ENCODE measurements at regions of chr4 and their contacts with region 1.

Region 1: GRCh38 chr4:40719008-40719623 is 30.6 kb upstream of the NSUN7 start:
- DNase-seq: peak in 1 of 9 donors; percentile 39
- ATAC-seq: no peak
- H3K4me3 ChIP-seq: no peak overlapping the region
- H3K4me3 Mint-ChIP-seq: no peak overlapping the region
- H3K27ac ChIP-seq: no peak overlapping the region
- H3K27ac Mint-ChIP-seq: peak overlapping the region in 1 of 9 donors; percentile 36
- H3K4me1 ChIP-seq: peaks cover 0 to 13% of the 10 kb centered on the region in 2 donors
- H3K4me1 Mint-ChIP-seq: peaks cover 0 to 33% (median 0%) of the 10 kb centered on the region in 7 donors
- H3K27me3 ChIP-seq: no peaks in the 10 kb centered on the region
- H3K27me3 Mint-ChIP-seq: no peaks in the 10 kb centered on the region

Region 2: GRCh38 chr4:40325189-40326019 is 393.7 kb before region 1 on chr4:
- CTCF ChIA-PET with region 1: no interaction called
- POLR2A ChIA-PET with region 1: no interaction called
- intact Hi-C with region 1: loop called in 1 of 2 experiments (anchors 2 kb)
- DNase-seq: peak in 7 of 9 donors; percentile 70 to 85 (median 82)
- ATAC-seq: peak; percentile 100
- H3K4me3 ChIP-seq: no peak overlapping the region
- H3K4me3 Mint-ChIP-seq: peak overlapping the region in 4 of 10 donors; percentile 0 to 48 (median 14)
- H3K27ac ChIP-seq: peak overlapping the region; percentile 45
- H3K27ac Mint-ChIP-seq: peak overlapping the region in 8 of 9 donors; percentile 25 to 87 (median 64)
- H3K4me1 ChIP-seq: peaks cover 0 to 8% of the 10 kb centered on the region in 2 donors
- H3K4me1 Mint-ChIP-seq: peaks cover 13 to 40% (median 35%) of the 10 kb centered on the region in 7 donors
- H3K27me3 ChIP-seq: no peaks in the 10 kb centered on the region
- H3K27me3 Mint-ChIP-seq: peaks cover 0 to 7% (median 4%) of the 10 kb centered on the region in 5 donors

Region 3: DNA sequence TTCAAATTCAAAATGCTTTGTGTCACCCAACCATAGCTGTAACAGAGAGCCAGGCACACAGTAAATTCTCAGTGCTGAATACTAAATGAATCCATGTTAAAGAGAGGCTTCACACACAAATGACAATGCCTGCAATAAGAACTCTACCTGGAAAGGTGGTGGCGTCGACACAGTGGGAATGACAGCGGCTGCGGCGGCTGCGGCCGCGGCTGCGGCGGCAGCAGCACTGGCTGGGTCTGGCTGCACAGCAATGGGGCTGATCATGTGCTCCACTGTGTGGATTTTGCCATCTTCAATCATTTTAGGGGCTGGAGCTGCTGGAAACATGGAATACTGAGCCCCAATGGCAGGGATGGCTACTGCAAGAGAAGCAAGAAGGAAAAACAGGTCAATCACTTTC is 286.6 kb before region 1 on chr4:
- CTCF ChIA-PET with region 1: no interaction called
- POLR2A ChIA-PET with region 1: no interaction called
- intact Hi-C with region 1: loop called in 1 of 2 experiments (anchors 2 kb)
- DNase-seq: no peak
- ATAC-seq: no peak
- H3K4me3 ChIP-seq: no peak overlapping the region
- H3K4me3 Mint-ChIP-seq: peak overlapping the region in 6 of 10 donors; percentile 11 to 62 (median 51)
- H3K27ac ChIP-seq: peak overlapping the region; percentile 61
- H3K27ac Mint-ChIP-seq: peak overlapping the region; percentile 83 to 99 (median 89)
- H3K4me1 ChIP-seq: peaks cover 0 to 29% of the 10 kb centered on the region in 2 donors
- H3K4me1 Mint-ChIP-seq: peaks cover 11 to 60% (median 42%) of the 10 kb centered on the region in 7 donors
- H3K27me3 ChIP-seq: no peaks in the 10 kb centered on the region
- H3K27me3 Mint-ChIP-seq: no peaks in the 10 kb centered on the region

Region 4: DNA sequence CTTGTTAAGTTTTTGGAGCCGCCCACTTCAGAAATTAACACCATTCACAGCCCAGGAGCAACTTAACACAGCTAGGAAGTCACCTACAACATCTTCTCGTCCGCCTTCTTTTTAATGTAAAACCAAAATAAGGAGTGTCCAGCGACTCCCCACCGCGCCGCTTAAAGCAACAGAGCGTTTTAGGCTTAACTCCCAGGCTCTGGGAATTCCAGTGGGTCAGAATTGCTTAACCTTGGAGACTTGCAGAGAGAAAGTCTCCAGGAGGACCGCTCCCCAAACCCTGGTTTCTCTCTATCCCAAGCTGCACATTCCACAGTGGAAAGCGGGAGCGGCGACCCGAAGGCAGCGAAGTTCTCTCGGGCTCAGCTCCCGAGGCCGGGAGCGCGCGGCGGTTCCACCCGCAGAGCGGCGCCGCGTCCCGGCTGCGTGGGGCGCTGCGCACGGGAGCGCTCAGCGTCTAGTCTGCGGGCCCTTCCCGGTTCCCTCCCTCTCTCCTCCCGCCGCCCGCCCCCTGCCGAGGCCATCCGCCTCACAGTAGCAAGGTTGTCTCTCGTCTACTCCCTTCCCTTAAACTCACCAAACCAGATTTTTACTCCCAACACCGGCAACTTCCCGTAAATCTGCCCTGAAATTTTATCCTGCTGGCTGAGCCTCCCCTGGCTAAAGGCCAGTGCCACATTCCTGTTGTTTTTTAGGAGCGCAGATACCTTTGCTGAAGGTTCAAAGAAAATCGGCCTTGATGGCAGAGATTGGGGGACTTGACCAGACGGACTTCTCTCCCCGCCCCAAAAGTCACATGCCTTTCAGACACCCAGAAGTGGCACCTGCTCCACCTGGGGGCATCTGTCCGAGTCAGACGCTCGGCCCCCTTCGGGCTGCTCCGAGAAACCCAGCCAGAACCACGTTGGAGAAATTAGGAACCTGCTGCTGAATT is 89.4 kb before region 1 on chr4 and contains the start of gene RBM47:
- CTCF ChIA-PET with region 1: no interaction called
- POLR2A ChIA-PET with region 1: no interaction called
- intact Hi-C with region 1: loop called in 1 of 2 experiments (anchors 5 kb)
- DNase-seq: peak; percentile 4 to 43 (median 28)
- ATAC-seq: peak; percentile 81
- H3K4me3 ChIP-seq: peak within 1 kb of the TSS; percentile 76
- H3K4me3 Mint-ChIP-seq: peak within 1 kb of the TSS; percentile 77 to 97 (median 90)
- H3K27ac ChIP-seq: peak within 1 kb of the TSS; percentile 17
- H3K27ac Mint-ChIP-seq: peak within 1 kb of the TSS in 8 of 9 donors; percentile 62 to 89 (median 80)
- H3K4me1 ChIP-seq: peaks cover 0 to 13% of the 10 kb centered on the region in 2 donors
- H3K4me1 Mint-ChIP-seq: peaks cover 18 to 36% (median 22%) of the 10 kb centered on the region in 7 donors
- H3K27me3 ChIP-seq: no peaks in the 10 kb centered on the region
- H3K27me3 Mint-ChIP-seq: peaks cover 0 to 28% (median 21%) of the 10 kb centered on the region in 5 donors
- total RNA-seq, gene RBM47: 1.8 to 47.2 (median 2.6) TPM

Region 5: DNA sequence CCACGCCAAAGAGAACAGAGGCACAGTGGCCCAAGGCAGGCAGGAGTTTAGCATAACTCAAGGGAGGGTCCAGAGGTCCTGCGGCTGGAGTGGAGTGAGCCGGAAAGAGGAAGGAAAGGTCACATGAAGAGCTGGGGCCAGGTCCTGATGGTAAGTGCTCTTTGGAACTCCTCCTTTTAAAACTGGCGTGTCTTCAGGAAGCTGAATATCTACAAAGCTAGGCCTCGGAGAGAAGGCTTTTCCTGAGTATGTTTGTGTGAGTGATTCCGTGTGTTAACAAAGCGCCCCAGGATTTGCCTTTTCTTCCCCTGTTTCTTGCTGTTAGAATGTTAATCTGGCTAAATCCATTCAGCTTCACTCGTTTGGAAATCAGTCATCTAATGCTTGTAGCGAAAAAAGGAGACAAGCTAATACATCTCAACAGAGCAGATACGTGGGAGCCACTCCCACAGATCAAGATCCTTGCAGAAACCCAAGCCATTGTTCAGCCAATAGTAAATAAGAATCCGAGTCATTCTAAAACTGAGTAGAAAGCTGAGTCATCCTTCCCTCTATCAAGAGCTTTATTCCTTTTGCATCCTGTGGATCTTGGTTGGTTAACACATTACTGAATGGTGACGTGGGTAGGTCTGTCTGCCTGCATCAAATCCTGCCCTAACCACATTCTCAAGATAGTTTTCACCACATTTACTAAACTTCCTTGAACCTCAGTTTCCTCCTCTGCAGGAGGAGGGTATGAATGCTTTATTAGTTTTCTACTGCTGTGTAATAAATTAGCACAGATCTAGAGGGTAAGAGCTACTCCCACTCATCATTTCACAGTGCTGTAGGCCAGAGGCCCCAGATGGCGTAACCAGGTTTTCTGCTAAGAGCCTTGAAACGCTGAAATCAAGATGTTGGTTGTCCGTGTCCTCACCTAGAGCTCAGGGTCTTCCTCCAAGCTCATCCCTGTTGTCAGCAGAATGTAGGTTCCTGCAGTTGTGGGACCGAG is 46.3 kb before region 1 on chr4:
- CTCF ChIA-PET with region 1: no interaction called
- POLR2A ChIA-PET with region 1: no interaction called
- intact Hi-C with region 1: loop called in 1 of 2 experiments (anchors 2 kb)
- DNase-seq: peak in 6 of 9 donors; percentile 4 to 49 (median 29)
- ATAC-seq: peak; percentile 88
- H3K4me3 ChIP-seq: no peak overlapping the region
- H3K4me3 Mint-ChIP-seq: peak overlapping the region in 3 of 10 donors; percentile 15 to 80 (median 31)
- H3K27ac ChIP-seq: no peak overlapping the region
- H3K27ac Mint-ChIP-seq: peak overlapping the region in 5 of 9 donors; percentile 42 to 94 (median 65)
- H3K4me1 ChIP-seq: peaks cover 4 to 16% of the 10 kb centered on the region in 2 donors
- H3K4me1 Mint-ChIP-seq: peaks cover 12 to 50% (median 14%) of the 10 kb centered on the region in 7 donors
- H3K27me3 ChIP-seq: no peaks in the 10 kb centered on the region
- H3K27me3 Mint-ChIP-seq: no peaks in the 10 kb centered on the region

Measured in naive thymus-derived CD4-positive, alpha-beta T cell (primary cell).